ENCODE measurements at regions of chr4 and their contacts with region 1.

Region 1: DNA sequence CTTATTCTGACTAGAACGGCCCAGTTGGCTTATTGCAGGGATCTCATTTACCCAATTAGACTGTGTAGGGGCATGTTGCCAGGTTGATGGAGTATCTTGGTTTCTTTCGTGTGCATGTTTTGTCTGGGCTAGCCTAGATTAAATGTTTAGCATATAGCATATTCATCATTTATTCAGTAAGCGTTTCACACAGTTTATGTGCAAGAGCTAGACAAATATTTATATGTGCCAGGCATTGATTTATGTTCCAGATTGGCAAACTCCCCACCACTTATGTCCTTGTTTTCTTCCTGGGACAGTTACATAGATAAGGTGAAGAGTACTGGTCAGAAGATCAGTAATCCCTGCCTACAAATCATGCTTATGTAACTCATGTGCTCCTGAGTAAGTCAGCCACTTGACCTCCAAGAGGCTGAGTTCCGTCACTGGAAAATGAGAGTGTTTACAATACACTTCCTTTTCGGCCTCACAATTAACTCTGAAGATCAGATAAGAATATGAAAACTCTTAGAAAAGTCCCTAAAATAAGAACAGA is 57.2 kb downstream of the RUFY3 start:
- DNase-seq: peak; percentile 92
- ATAC-seq: peak; percentile 88
- H3K4me3 ChIP-seq: no peak overlapping the region
- H3K27ac ChIP-seq: no peak overlapping the region
- H3K4me1 ChIP-seq: no peaks in the 10 kb centered on the region
- H3K27me3 ChIP-seq: no peaks in the 10 kb centered on the region
- CTCF ChIP-seq: no peak
- POLR2A ChIP-seq: no peak
- RAD21 ChIP-seq: no peak

Region 2: GRCh38 chr4:70601422-70602039 is 177.4 kb before region 1 on chr4:
- CTCF ChIA-PET with region 1: no interaction called
- POLR2A ChIA-PET with region 1: no interaction called
- dilution Hi-C with region 1: no loop called
- in situ Hi-C with region 1: no loop called
- intact Hi-C with region 1: loop called (anchors 10 kb)
- DNase-seq: peak; percentile 74
- ATAC-seq: peak; percentile 93
- H3K4me3 ChIP-seq: no peak overlapping the region
- H3K27ac ChIP-seq: no peak overlapping the region
- H3K4me1 ChIP-seq: peaks cover 2% of the 10 kb centered on the region; the same call in 1 of the 2 replicates
- H3K27me3 ChIP-seq: no peaks in the 10 kb centered on the region
- CTCF ChIP-seq: peak; percentile 75
- POLR2A ChIP-seq: no peak
- RAD21 ChIP-seq: peak; percentile 95

Region 3: GRCh38 chr4:70704331-70705145 is 74.4 kb before region 1 on chr4:
- CTCF ChIA-PET with region 1: no interaction called
- POLR2A ChIA-PET with region 1: no interaction called
- dilution Hi-C with region 1: no loop called
- in situ Hi-C with region 1: no loop called
- intact Hi-C with region 1: loop called (anchors 5 kb)
- DNase-seq: peak; percentile 67
- ATAC-seq: peak; percentile 75
- H3K4me3 ChIP-seq: peak overlapping the region; percentile 67
- H3K27ac ChIP-seq: peak overlapping the region; percentile 93
- H3K4me1 ChIP-seq: peaks cover 4% of the 10 kb centered on the region; the same call in 1 of the 2 replicates
- H3K27me3 ChIP-seq: no peaks in the 10 kb centered on the region
- CTCF ChIP-seq: peak; percentile 42
- POLR2A ChIP-seq: no peak
- RAD21 ChIP-seq: no peak

Region 4: GRCh38 chr4:71677568-71677967 is 898.6 kb after region 1 on chr4:
- CTCF ChIA-PET with region 1: no interaction called
- POLR2A ChIA-PET with region 1: no interaction called
- dilution Hi-C with region 1: no loop called
- in situ Hi-C with region 1: no loop called
- intact Hi-C with region 1: no loop called
- DNase-seq: no peak
- ATAC-seq: no peak
- H3K4me3 ChIP-seq: no peak overlapping the region
- H3K27ac ChIP-seq: no peak overlapping the region
- H3K4me1 ChIP-seq: no peaks in the 10 kb centered on the region
- H3K27me3 ChIP-seq: peaks cover 3% of the 10 kb centered on the region; the same call in 1 of the 2 replicates
- CTCF ChIP-seq: no peak
- POLR2A ChIP-seq: no peak
- RAD21 ChIP-seq: no peak

Measured in IMR-90 (cell line).